A549 (cell line): ENCODE measurements at regions of chr14 and their contacts with region 1.

Region 1: DNA sequence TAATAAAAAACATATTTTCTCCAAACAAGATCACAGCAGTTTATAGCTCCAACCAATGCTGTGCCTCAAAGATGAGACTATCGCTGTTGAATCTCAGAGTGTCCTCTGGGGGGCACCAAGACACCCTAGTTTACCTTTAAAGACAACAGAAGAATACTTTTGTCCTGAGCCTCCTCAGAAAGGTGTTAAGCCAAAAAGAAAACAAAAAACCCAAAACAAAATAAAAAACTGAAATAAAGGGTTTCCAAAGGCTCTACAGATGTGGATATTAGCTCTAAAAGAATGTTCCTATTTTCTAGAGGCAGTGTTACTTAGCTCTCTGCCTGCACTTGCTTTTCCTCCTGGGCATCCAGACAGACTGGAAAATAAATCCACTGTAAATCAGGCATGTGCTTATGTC is 86.9 kb upstream of the TTC7B start:
- DNase-seq: peak; percentile 63 to 74
- ATAC-seq: peak; percentile 88 to 94
- H3K4me3 ChIP-seq: no peak overlapping the region
- H3K27ac ChIP-seq: no peak overlapping the region
- H3K4me1 ChIP-seq: no peaks in the 10 kb centered on the region
- CTCF ChIP-seq: peak; percentile 92
- EP300 ChIP-seq: no peak
- POLR2A ChIP-seq: no peak
- RAD21 ChIP-seq: peak; percentile 88 to 92

Region 2: GRCh38 chr14:91060351-91061055 is 157.4 kb after region 1 on chr14 and contains the start of gene RPS6KA5:
- CTCF ChIA-PET with region 1: interaction called, 25 read pairs
- POLR2A ChIA-PET with region 1: no interaction called
- DNase-seq: peak; percentile 97 to 100
- ATAC-seq: peak; percentile 93 to 96
- H3K4me3 ChIP-seq: peak within 1 kb of the TSS; percentile 67
- H3K27ac ChIP-seq: peak within 1 kb of the TSS; percentile 73 to 91
- H3K4me1 ChIP-seq: peaks cover 22% of the 10 kb centered on the region
- CTCF ChIP-seq: no peak; the same call in 2 of the 3 replicates
- EP300 ChIP-seq: no peak
- POLR2A ChIP-seq: peak; percentile 25; the same call in 1 of the 2 replicates
- RAD21 ChIP-seq: 0 out of 5 replicates have a peak, but pooled peaks of 1 of the 2 experiments have one; percentile 28
- polyA plus RNA-seq, gene RPS6KA5: 3.6 and 4.1 TPM in 2 replicates

Region 3: DNA sequence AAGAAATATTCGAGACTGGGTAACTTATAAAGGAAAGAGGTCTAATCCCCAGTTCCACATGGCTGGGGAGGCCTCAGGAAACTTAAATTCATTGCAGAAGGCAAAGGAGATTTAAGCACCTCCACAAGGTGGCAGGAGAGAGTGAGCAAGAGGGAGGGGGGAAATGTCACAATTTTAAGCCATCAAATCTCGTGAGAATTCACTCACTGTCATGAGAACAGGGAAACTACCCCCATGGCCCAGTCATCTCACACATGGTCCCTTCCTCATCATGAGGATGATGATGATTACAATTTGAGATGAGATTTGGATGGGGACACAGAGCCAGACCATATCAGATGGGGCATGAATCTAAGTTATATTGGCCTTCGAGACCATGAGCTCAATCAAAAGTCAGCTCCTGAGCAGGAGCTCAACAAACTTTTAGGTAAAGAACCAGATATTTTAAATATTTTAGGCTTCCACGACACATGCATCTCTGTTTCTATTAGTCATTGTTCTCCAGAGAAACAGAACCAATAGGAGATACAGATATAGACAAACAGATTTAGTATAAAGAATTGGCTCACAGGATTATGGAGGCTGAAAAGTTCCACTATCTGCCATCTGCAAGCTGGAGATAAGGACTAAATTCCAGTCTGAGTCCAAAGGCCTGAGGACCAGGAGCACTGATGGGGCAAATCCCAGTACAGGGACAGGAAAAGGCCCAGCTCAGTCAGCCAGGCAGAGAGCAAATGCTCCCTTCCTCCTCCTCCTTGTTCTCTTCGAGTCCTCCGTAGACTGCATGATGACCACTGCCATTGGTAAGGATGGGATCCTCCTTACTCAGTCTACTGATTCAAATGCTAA is 235.6 kb after region 1 on chr14:
- CTCF ChIA-PET with region 1: interaction called, 29 read pairs
- POLR2A ChIA-PET with region 1: no interaction called
- DNase-seq: peak; percentile 28 to 62
- ATAC-seq: peak; percentile 54 to 70; a peak in 3 of 6 replicates
- H3K4me3 ChIP-seq: no peak overlapping the region
- H3K27ac ChIP-seq: no peak overlapping the region
- H3K4me1 ChIP-seq: 0 out of 3 replicates have a peak, but pooled peaks cover 5% of the 10 kb centered on the region
- CTCF ChIP-seq: peak; percentile 41
- EP300 ChIP-seq: no peak
- POLR2A ChIP-seq: no peak
- RAD21 ChIP-seq: peak; percentile 26 to 37; a peak in 2 of 5 replicates

Region 4: DNA sequence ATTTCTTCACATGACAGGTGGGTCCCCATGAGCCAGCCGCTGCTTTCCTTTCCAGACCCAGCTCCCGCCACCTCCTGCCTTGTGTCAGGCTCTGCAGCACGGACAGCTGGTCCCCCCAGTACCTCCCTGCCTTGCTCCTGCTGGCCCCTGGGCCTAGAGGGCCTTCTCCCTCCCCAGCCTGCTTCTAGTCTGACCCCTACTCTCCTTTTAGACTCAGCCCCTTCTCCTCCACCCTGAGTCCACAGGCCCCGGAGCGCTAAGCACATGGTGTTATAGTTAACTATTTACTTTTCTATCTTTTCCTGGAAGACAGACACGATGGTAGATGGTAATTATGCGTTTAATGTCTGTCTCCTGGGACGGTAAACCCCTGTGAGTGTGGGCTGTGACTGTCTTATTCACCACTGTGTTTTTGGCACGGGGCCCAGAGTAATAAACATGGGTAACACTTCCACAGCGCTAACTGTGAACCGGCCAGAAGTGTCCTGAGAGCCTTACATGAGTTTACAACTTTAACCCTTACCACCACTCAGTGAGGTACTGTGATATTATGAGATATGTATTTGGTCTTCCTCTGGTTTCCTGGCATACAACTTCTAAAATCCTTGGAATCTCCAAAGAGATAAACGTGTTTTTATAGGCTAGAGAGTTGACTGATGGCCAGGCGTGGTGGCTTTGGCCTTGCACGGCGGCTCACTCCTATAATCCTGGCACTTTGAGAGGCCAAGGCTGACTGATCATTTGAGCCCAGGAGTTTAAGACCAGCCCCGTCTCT is 251.9 kb after region 1 on chr14:
- CTCF ChIA-PET with region 1: interaction called, 17 read pairs
- POLR2A ChIA-PET with region 1: interaction called, 5 read pairs
- DNase-seq: peak in 1 of 2 experiments; percentile 30
- ATAC-seq: peak; percentile 34 to 74; a peak in 5 of 6 replicates
- H3K4me3 ChIP-seq: no peak overlapping the region
- H3K27ac ChIP-seq: peak overlapping the region; percentile 36 to 48; a peak in 4 of 6 replicates
- H3K4me1 ChIP-seq: peaks cover 26% of the 10 kb centered on the region
- CTCF ChIP-seq: no peak
- EP300 ChIP-seq: no peak
- POLR2A ChIP-seq: no peak
- RAD21 ChIP-seq: no peak

Region 5: GRCh38 chr14:91286530-91286937 is 383.4 kb after region 1 on chr14:
- CTCF ChIA-PET with region 1: interaction called, 31 read pairs
- POLR2A ChIA-PET with region 1: no interaction called
- DNase-seq: peak; percentile 73 to 88
- ATAC-seq: peak; percentile 91 to 96
- H3K4me3 ChIP-seq: no peak overlapping the region
- H3K27ac ChIP-seq: no peak overlapping the region
- H3K4me1 ChIP-seq: no peaks in the 10 kb centered on the region
- CTCF ChIP-seq: peak; percentile 90
- EP300 ChIP-seq: no peak
- POLR2A ChIP-seq: no peak
- RAD21 ChIP-seq: peak; percentile 75 to 79

Region 6: GRCh38 chr14:91292491-91292890 is 389.4 kb after region 1 on chr14:
- CTCF ChIA-PET with region 1: interaction called, 31 read pairs
- POLR2A ChIA-PET with region 1: no interaction called
- DNase-seq: no peak
- ATAC-seq: no peak
- H3K4me3 ChIP-seq: no peak overlapping the region
- H3K27ac ChIP-seq: no peak overlapping the region
- H3K4me1 ChIP-seq: no peaks in the 10 kb centered on the region
- CTCF ChIP-seq: no peak
- EP300 ChIP-seq: no peak
- POLR2A ChIP-seq: no peak
- RAD21 ChIP-seq: no peak